ENCODE measurements at regions of chr17 and their contacts with region 1.

Region 1: DNA sequence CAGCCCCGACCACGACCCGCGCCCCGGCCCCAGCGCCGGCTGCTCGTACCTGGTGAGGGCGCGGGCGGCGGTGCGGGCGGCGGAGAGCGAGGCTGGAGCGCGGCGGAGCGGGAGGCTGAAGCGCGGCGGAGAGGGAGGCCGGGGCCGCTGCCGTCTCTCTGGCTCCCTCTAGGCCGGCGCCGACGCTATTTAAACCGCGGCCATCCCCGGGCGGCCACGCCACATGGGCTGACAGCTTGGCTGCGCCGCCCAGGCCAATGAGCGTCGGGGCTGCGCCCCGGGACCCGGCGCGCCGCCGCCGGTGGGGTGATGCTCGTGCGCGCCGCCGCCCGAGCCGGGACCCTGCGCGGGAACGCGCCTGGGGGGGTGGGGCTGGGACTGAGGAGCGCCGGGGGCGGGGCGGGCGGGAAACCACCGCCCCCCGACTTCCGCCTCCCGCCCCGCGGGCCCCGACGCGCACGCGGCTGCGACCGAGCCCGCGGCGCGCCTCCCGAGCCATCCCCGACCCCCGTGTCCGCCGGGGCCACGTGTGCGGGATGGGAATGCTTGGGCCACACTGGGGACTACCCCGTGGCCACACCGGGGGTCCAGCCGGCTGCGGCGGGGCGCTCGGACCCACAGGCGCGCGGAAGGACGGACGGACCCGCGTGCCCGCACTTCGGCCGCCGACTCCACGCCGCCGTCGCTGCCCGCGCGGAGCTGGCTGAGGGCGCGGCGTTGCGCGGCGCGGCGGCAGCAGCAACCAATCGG is at the start of gene FASN:
- DNase-seq: peak; percentile 84 to 96
- ATAC-seq: peak; percentile 74 to 89 (median 80)
- H3K4me3 ChIP-seq: peak within 1 kb of the TSS; percentile 42
- H3K4me3 Mint-ChIP-seq: peak within 1 kb of the TSS; percentile 83
- H3K27ac ChIP-seq: peak within 1 kb of the TSS; percentile 86
- H3K27ac Mint-ChIP-seq: peak within 1 kb of the TSS in 1 of 2 donors; percentile 81
- H3K4me1 ChIP-seq: peaks cover 23% of the 10 kb centered on the region
- H3K4me1 Mint-ChIP-seq: peaks cover 0 to 4% of the 10 kb centered on the region in 2 donors
- H3K27me3 ChIP-seq: no peaks in the 10 kb centered on the region
- H3K27me3 Mint-ChIP-seq: no peaks in the 10 kb centered on the region
- CTCF ChIP-seq: peak; percentile 23
- total RNA-seq, gene FASN: 53.8 to 56.2 (median 54.0) TPM

Region 2: GRCh38 chr17:81959362-81960129 is 138.7 kb before region 1 on chr17:
- intact Hi-C with region 1: no loop called
- DNase-seq: peak; percentile 84 to 93
- ATAC-seq: peak; percentile 95 to 96 (median 96)
- H3K4me3 ChIP-seq: peak overlapping the region; percentile 7
- H3K4me3 Mint-ChIP-seq: peak overlapping the region; percentile 68
- H3K27ac ChIP-seq: no peak overlapping the region
- H3K27ac Mint-ChIP-seq: no peak overlapping the region
- H3K4me1 ChIP-seq: peaks cover 28% of the 10 kb centered on the region
- H3K4me1 Mint-ChIP-seq: no peaks in the 10 kb centered on the region
- H3K27me3 ChIP-seq: peaks cover 25% of the 10 kb centered on the region
- H3K27me3 Mint-ChIP-seq: peaks cover 19 to 28% of the 10 kb centered on the region in 2 donors
- CTCF ChIP-seq: peak; percentile 87

Region 3: GRCh38 chr17:82022981-82023374 is 75.3 kb before region 1 on chr17 and contains the start of gene LRRC45:
- intact Hi-C with region 1: loop called (anchors 2 kb)
- DNase-seq: peak; percentile 99
- ATAC-seq: peak; percentile 94 to 99 (median 94)
- H3K4me3 ChIP-seq: peak within 1 kb of the TSS; percentile 77
- H3K4me3 Mint-ChIP-seq: peak within 1 kb of the TSS; percentile 83
- H3K27ac ChIP-seq: peak within 1 kb of the TSS; percentile 38
- H3K27ac Mint-ChIP-seq: peak within 1 kb of the TSS in 1 of 2 donors; percentile 92
- H3K4me1 ChIP-seq: peaks cover 29% of the 10 kb centered on the region
- H3K4me1 Mint-ChIP-seq: peaks cover 7 to 34% of the 10 kb centered on the region in 2 donors
- H3K27me3 ChIP-seq: no peaks in the 10 kb centered on the region
- H3K27me3 Mint-ChIP-seq: no peaks in the 10 kb centered on the region
- CTCF ChIP-seq: no peak
- total RNA-seq, gene LRRC45: 15.9 to 21.6 (median 16.8) TPM

Region 4: GRCh38 chr17:82559566-82560251 is 461.5 kb after region 1 on chr17:
- intact Hi-C with region 1: no loop called
- DNase-seq: no peak
- ATAC-seq: no peak
- H3K4me3 ChIP-seq: no peak overlapping the region
- H3K4me3 Mint-ChIP-seq: no peak overlapping the region
- H3K27ac ChIP-seq: no peak overlapping the region
- H3K27ac Mint-ChIP-seq: no peak overlapping the region
- H3K4me1 ChIP-seq: peaks cover 5% of the 10 kb centered on the region
- H3K4me1 Mint-ChIP-seq: peaks cover 17 to 21% of the 10 kb centered on the region in 2 donors
- H3K27me3 ChIP-seq: no peaks in the 10 kb centered on the region
- H3K27me3 Mint-ChIP-seq: no peaks in the 10 kb centered on the region
- CTCF ChIP-seq: no peak